AG04449 (cell line): ENCODE measurements at regions of chr7 and their contacts with region 1.

Region 1: GRCh38 chr7:25093268-25093826 is 31.7 kb downstream of the CYCS start:
- DNase-seq: no peak
- H3K4me3 ChIP-seq: no peak overlapping the region
- CTCF ChIP-seq: peak; percentile 87

Region 2: DNA sequence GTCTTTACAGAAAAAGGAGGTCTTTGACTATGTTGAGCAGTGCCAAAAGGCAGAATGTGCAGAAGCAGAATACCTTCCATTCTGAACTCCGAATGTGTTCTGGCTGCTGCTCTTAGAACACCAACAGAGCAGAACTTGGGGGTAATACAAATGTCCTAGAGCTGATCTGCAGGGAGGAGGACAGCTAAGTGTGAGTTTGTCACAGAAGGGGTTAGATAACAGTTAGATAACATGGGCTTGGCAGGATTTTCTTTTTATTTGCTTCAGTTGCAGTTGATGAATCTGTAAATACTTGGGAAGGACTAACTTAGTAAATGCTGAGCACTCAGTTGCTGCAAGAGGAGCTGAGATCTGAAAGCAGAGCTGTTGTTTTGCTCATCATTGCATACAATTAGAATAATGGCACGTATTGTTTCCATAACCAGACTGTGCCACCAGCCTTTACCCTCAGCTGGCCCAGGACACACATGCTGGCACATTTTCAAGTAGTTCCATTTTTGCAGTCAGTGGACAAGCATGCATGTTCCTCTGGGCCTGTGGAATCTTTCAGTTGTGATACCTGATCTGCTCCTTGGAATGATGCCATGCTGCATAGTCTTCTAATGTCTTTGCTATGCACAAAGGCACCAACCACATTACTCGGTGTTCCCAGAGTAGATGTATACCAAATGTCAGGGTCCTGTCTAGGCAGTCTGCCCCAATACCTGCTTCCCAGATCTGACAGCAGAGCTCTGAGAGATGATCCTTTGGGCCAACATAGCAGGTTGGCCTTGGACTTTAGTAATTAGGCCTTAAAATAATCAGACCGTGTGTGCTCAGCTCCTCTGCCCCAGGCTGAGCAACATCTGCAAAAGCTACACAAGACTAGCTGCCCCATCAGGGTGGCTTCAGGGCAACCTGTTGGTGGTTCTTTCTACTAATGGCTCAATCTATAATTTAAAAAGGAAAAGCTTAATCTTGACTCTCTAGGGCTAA is 391.8 kb before region 1 on chr7:
- CTCF ChIA-PET with region 1: interaction called, 14 read pairs
- POLR2A ChIA-PET with region 1: no interaction called
- DNase-seq: peak; percentile 86
- H3K4me3 ChIP-seq: no peak overlapping the region
- CTCF ChIP-seq: no peak

Region 3: DNA sequence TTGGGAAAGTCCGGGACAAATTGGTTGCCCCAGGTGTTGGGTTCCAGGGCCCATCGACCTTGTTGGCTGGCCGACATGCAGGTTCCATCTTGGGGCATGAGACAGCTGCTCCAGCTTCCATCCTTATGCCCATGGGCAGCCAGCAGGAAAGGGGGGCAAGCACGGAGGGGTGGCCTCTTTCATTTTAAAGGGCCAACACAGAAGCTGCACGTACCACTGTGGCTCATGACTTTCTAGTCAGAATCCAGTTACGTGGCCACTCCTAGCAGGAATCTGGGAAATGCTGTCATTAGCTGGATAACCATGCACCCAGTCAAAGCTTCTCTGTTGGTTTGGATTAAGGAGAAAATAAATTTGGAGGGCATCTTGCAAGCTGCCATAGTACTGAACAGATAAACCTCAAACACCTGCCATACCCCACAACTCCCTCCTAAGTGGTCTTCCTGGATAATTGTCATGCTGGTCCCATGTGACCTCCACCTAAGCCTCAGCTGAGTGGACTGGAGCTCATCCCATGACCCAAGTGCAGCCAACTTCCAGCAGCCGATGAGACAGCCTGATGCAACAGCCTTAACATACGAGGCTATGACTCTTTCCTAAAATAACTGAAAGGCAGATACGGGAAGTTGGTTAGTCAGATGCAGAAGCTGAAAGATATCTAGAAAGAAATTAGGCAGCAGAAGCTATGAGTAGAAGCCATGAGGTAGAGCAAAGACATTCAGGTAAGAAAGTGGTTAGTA is 314.6 kb before region 1 on chr7:
- CTCF ChIA-PET with region 1: interaction called, 24 read pairs
- POLR2A ChIA-PET with region 1: no interaction called
- DNase-seq: peak; percentile 77
- H3K4me3 ChIP-seq: no peak overlapping the region
- CTCF ChIP-seq: no peak

Region 4: DNA sequence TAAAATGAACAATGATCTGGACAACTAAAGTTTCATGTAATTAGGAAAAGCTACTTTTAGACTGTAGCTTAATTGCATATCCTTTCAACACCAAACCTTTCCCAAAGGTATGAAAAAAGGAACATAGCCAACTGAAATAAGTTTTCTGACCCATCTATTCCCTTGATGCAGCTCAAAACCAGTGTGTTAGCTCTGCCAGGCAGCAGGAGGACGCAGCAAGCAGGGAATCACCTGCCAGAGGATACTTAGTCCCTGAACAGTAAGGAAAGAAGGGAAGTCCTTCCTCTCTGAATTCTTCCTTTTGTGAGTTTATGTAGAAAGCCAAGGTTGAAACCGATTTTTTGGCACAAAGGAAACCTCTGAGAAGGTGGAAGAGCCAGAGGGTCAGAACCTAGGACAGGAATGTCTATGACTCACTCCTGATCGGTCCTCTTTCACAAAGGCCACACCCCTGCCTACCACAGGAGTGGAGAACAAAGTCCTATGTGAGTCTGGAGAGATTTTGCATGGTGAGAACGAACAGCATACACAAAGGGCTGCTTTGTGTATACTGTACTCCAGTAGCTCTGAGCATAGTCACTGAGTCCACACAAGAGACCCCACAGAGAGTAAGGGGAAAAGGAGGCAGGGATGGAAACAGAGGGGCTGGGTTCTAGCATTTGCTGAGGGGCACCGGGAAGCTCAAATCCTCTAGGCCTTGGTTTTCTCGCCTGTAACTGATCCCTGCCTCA is 267.3 kb before region 1 on chr7:
- CTCF ChIA-PET with region 1: interaction called, 928 read pairs
- POLR2A ChIA-PET with region 1: interaction called, 6 read pairs
- DNase-seq: no peak
- H3K4me3 ChIP-seq: no peak overlapping the region
- CTCF ChIP-seq: no peak

Region 5: GRCh38 chr7:24896031-24896501 is 197.3 kb before region 1 on chr7:
- CTCF ChIA-PET with region 1: interaction called, 24 read pairs
- POLR2A ChIA-PET with region 1: no interaction called
- DNase-seq: no peak
- H3K4me3 ChIP-seq: no peak overlapping the region
- CTCF ChIP-seq: no peak

Region 6: DNA sequence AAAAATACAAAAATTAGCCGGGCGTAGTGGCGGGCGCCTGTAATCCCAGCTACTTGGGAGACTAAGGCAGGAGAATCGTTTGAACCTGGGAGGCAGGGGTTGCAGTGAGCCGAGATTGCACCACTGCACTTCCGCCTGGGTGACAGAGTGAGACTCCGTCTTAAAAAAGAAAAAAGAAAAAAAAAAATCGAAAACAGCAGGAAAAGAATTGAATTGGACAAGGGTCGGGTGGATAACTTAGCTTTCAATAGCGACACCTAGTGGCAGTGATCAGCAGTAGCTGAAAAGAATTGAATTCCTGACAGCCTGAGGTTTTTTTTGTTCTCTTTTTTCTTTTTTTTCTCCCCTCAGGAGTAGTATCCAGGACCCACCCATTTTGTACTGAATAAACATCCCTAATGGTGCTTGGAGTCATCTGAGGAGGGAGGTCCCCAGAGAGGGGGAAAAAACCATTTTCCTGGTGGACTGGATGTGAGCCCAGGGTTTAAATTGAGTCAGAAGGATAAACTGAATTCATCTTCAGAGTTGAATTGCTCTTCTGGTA is 23.4 kb before region 1 on chr7:
- CTCF ChIA-PET with region 1: interaction called, 171 read pairs
- POLR2A ChIA-PET with region 1: no interaction called
- DNase-seq: no peak
- H3K4me3 ChIP-seq: no peak overlapping the region
- CTCF ChIP-seq: peak; percentile 63